CD4-positive, alpha-beta memory T cell (primary cell): ENCODE measurements at regions of chr7 and their contacts with region 1.

Region 1: DNA sequence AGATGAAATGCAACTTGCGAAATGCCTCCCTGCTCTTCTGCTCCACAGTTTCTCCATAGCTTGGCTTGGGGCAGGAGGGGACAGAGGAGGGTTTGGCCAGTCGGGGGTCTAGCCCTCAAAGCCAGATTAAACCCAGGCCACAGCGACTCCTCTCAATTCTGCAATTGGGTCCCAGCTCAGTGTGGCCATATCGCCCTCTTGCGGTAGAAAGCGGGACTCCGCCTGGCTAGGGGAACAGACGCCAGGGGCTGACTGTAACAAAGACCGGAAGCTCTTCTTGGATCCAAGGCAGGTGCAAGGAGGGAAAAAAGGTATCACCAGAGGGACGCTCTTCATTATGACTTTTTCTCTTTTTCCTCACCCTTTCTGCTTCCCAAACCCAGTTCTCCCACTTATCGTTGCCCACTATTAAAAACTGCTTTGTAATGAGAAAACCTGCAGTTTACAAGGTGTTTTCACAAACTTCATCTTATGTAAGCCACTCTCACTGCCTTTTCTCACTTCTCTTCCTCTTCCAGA is 36.6 kb upstream of the TNPO3 start:
- DNase-seq: peak; percentile 71 to 80 (median 78)
- H3K4me3 ChIP-seq: no peak overlapping the region
- H3K4me3 Mint-ChIP-seq: no peak overlapping the region
- H3K27ac ChIP-seq: no peak overlapping the region
- H3K27ac Mint-ChIP-seq: peak overlapping the region in 5 of 7 donors; percentile 1 to 70 (median 54)
- H3K4me1 ChIP-seq: peaks cover 18% of the 10 kb centered on the region
- H3K4me1 Mint-ChIP-seq: peaks cover 10 to 24% (median 16%) of the 10 kb centered on the region in 4 donors
- H3K27me3 ChIP-seq: peaks cover 3% of the 10 kb centered on the region
- H3K27me3 Mint-ChIP-seq: no peaks in the 10 kb centered on the region

Region 2: GRCh38 chr7:128904381-128905197 is 187.0 kb before region 1 on chr7:
- CTCF ChIA-PET with region 1: interaction called, 41 read pairs
- POLR2A ChIA-PET with region 1: no interaction called
- intact Hi-C with region 1: no loop called
- DNase-seq: peak in 4 of 5 donors; percentile 57 to 72 (median 65)
- H3K4me3 ChIP-seq: no peak overlapping the region
- H3K4me3 Mint-ChIP-seq: peak overlapping the region in 1 of 8 donors; percentile 13
- H3K27ac ChIP-seq: no peak overlapping the region
- H3K27ac Mint-ChIP-seq: peak overlapping the region in 1 of 7 donors; percentile 22
- H3K4me1 ChIP-seq: no peaks in the 10 kb centered on the region
- H3K4me1 Mint-ChIP-seq: peaks cover 0 to 3% (median 0%) of the 10 kb centered on the region in 4 donors
- H3K27me3 ChIP-seq: no peaks in the 10 kb centered on the region
- H3K27me3 Mint-ChIP-seq: peaks cover 16 to 31% of the 10 kb centered on the region in 2 donors

Region 3: GRCh38 chr7:128909625-128910257 is 181.8 kb before region 1 on chr7:
- CTCF ChIA-PET with region 1: interaction called, 23 read pairs
- POLR2A ChIA-PET with region 1: no interaction called
- intact Hi-C with region 1: no loop called
- DNase-seq: no peak
- H3K4me3 ChIP-seq: no peak overlapping the region
- H3K4me3 Mint-ChIP-seq: no peak overlapping the region
- H3K27ac ChIP-seq: no peak overlapping the region
- H3K27ac Mint-ChIP-seq: peak overlapping the region in 1 of 7 donors; percentile 8
- H3K4me1 ChIP-seq: peaks cover 2% of the 10 kb centered on the region
- H3K4me1 Mint-ChIP-seq: peaks cover 2 to 8% (median 5%) of the 10 kb centered on the region in 4 donors
- H3K27me3 ChIP-seq: peaks cover 5% of the 10 kb centered on the region
- H3K27me3 Mint-ChIP-seq: peaks cover 28 to 54% of the 10 kb centered on the region in 2 donors

Region 4: DNA sequence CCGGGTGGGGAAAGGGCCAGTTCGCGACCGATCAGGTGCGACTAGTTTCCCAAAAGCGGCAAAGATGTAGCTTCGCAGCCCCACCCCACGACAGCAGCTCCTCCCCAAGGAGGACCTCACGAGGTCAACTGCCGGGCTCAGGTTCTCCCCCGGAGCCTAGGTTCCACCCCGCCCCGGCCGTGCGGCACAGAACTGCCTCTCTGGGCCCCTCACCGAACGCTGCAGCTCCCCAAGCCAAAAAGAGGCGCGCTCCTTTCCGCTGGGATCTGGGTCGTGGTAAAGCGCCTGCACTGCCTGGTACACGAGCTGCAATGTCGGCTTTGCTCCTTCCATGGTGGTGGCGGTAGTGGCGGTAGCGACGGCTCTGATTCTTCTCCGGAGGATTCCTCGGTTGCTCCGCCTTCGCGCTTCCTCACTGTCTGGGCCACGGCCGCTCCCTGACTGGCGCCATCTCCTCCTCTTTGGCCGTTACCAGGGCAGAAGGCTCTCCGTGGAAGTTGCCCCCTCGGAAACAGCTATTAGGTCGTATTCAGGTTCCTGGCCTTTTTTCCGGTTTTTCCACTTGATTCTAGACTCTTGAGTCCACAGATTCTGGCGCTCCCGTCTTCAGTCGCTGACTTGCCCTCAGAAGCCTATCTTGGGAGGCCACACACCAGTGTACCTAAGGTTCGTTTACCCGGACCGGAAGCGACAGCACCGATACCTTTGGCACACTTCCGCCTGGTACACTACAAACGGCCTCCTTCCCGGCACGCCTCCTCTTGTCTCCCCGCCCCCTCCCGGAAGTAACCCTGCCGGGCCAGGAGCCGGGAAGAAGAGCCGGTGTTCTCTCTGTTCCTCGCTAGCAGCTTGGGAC is 36.9 kb before region 1 on chr7 and contains the start of gene TNPO3:
- CTCF ChIA-PET with region 1: interaction called, 8 read pairs
- POLR2A ChIA-PET with region 1: interaction called, 3 read pairs
- intact Hi-C with region 1: loop called (anchors 2 kb)
- DNase-seq: peak; percentile 87 to 91 (median 88)
- H3K4me3 ChIP-seq: peak within 1 kb of the TSS; percentile 80 to 91
- H3K4me3 Mint-ChIP-seq: peak within 1 kb of the TSS; percentile 94 to 100 (median 98)
- H3K27ac ChIP-seq: peak within 1 kb of the TSS; percentile 82
- H3K27ac Mint-ChIP-seq: peak within 1 kb of the TSS; percentile 98 to 100 (median 99)
- H3K4me1 ChIP-seq: peaks cover 31% of the 10 kb centered on the region
- H3K4me1 Mint-ChIP-seq: peaks cover 20 to 51% (median 38%) of the 10 kb centered on the region in 4 donors
- H3K27me3 ChIP-seq: no peaks in the 10 kb centered on the region
- H3K27me3 Mint-ChIP-seq: peaks cover 3 to 7% of the 10 kb centered on the region in 2 donors
- total RNA-seq, gene TNPO3: 41.7 to 44.5 TPM

Region 5: DNA sequence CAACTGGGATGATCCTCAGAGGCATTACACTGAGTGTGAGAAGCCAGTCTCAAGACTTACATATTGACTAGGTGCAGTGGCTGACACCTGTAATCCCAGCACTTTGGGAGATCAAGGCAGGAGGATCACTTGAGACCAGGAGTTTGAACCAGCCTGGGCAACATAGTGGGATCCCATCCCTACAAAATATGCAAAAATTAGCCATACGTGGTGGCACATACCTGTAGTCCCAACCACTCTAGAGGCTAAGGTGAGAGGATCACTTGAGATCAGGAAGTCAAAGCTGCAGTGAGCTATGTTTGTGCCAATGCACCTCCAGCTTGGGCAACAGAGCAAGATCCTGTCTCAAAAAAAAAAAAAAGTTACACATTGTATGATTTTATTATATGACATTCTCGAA is 13.1 kb before region 1 on chr7:
- CTCF ChIA-PET with region 1: interaction called, 15 read pairs
- POLR2A ChIA-PET with region 1: interaction called, 3 read pairs
- intact Hi-C with region 1: no loop called
- DNase-seq: no peak
- H3K4me3 ChIP-seq: no peak overlapping the region
- H3K4me3 Mint-ChIP-seq: no peak overlapping the region
- H3K27ac ChIP-seq: no peak overlapping the region
- H3K27ac Mint-ChIP-seq: no peak overlapping the region
- H3K4me1 ChIP-seq: no peaks in the 10 kb centered on the region
- H3K4me1 Mint-ChIP-seq: no peaks in the 10 kb centered on the region
- H3K27me3 ChIP-seq: no peaks in the 10 kb centered on the region
- H3K27me3 Mint-ChIP-seq: peaks cover 4 to 6% of the 10 kb centered on the region in 2 donors

Region 6: DNA sequence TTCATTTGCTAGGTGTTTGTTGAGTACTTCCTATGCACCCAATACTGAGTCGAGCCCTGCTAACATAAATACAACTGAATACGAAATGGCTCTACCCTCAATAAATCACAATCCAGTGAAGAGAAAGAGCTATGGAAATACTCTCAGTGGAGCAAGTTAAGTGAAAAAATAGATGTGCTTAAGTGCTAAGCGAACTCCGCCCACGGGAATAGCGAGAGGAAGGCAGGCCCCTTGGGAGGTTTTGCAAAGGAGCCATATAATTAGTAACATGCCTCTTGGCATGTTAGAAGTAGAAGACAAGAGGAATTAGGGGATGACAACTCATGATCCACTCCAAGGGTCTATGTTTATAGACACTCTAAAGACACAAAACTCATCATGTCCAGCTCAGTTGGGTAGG is 10.2 kb after region 1 on chr7:
- CTCF ChIA-PET with region 1: interaction called, 36 read pairs
- POLR2A ChIA-PET with region 1: no interaction called
- intact Hi-C with region 1: no loop called
- DNase-seq: no peak
- H3K4me3 ChIP-seq: no peak overlapping the region
- H3K4me3 Mint-ChIP-seq: no peak overlapping the region
- H3K27ac ChIP-seq: no peak overlapping the region
- H3K27ac Mint-ChIP-seq: no peak overlapping the region
- H3K4me1 ChIP-seq: no peaks in the 10 kb centered on the region
- H3K4me1 Mint-ChIP-seq: no peaks in the 10 kb centered on the region
- H3K27me3 ChIP-seq: no peaks in the 10 kb centered on the region
- H3K27me3 Mint-ChIP-seq: peaks cover 3 to 4% of the 10 kb centered on the region in 2 donors

Region 7: GRCh38 chr7:129136887-129137642 is 45.5 kb after region 1 on chr7:
- CTCF ChIA-PET with region 1: no interaction called
- POLR2A ChIA-PET with region 1: no interaction called
- intact Hi-C with region 1: no loop called
- DNase-seq: peak in 3 of 5 donors; percentile 14 to 15 (median 14)
- H3K4me3 ChIP-seq: no peak overlapping the region
- H3K4me3 Mint-ChIP-seq: peak overlapping the region in 7 of 8 donors; percentile 0 to 68 (median 55)
- H3K27ac ChIP-seq: no peak overlapping the region
- H3K27ac Mint-ChIP-seq: peak overlapping the region; percentile 36 to 92 (median 78)
- H3K4me1 ChIP-seq: peaks cover 24% of the 10 kb centered on the region
- H3K4me1 Mint-ChIP-seq: peaks cover 20 to 33% (median 24%) of the 10 kb centered on the region in 4 donors
- H3K27me3 ChIP-seq: no peaks in the 10 kb centered on the region
- H3K27me3 Mint-ChIP-seq: no peaks in the 10 kb centered on the region

Region 8: DNA sequence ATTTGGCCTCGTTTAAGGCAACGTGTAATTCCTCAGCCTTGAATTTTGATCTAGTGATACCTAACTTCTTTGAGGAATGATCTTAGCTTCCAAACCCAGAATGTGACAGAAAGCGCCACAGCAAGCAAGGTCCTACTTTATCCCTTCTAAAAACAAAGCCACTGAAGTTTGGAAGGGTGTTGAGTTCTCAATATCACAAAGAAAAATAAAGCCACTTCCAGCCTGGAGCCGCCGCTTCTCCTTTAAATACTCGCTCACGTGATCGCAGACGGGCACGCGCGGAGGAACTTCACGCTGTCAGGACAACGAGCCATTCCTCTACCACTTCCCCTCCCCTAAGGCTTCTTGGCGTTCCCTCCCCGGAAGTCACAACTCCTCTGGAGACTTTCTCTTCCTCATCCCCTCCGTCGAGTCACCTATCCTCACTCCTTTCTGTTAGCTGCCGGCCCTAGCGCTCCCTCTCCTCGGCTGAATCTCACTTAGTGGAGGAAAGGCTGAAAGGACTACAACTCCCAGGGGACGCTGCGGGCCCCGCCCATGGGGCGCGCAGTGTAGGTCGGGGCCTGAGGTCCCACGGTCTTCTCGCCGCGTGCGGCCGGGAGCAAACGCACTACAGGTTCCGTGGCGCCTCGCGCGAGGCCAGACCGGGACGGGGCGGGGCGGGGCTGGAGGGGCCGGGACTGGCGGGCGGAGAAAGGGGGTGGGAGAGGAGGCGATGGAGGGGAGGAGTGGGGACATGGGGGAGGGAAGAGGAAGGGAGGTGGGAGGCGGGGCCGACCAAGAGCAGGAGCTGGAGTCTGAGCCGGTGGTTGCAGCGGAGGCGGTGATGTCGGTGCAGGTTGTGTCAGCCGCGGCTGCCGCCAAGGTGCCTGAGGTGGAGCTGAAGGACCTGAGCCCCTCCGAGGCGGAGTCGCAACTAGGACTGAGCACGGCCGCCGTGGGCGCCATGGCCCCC is 133.0 kb after region 1 on chr7 and contains the start of gene AHCYL2:
- CTCF ChIA-PET with region 1: no interaction called
- POLR2A ChIA-PET with region 1: no interaction called
- intact Hi-C with region 1: no loop called
- DNase-seq: peak; percentile 95 to 98 (median 96)
- H3K4me3 ChIP-seq: peak within 1 kb of the TSS; percentile 87 to 98
- H3K4me3 Mint-ChIP-seq: peak within 1 kb of the TSS; percentile 94 to 98 (median 95)
- H3K27ac ChIP-seq: peak within 1 kb of the TSS; percentile 80
- H3K27ac Mint-ChIP-seq: peak within 1 kb of the TSS; percentile 86 to 99 (median 97)
- H3K4me1 ChIP-seq: peaks cover 28% of the 10 kb centered on the region
- H3K4me1 Mint-ChIP-seq: peaks cover 28 to 48% (median 35%) of the 10 kb centered on the region in 4 donors
- H3K27me3 ChIP-seq: no peaks in the 10 kb centered on the region
- H3K27me3 Mint-ChIP-seq: no peaks in the 10 kb centered on the region
- total RNA-seq, gene AHCYL2: 15.4 to 16.5 TPM

Region 9: GRCh38 chr7:130966246-130967009 is 1874.9 kb after region 1 on chr7:
- CTCF ChIA-PET with region 1: no interaction called
- POLR2A ChIA-PET with region 1: no interaction called
- intact Hi-C with region 1: no loop called
- DNase-seq: no peak
- H3K4me3 ChIP-seq: no peak overlapping the region
- H3K4me3 Mint-ChIP-seq: peak overlapping the region in 1 of 8 donors; percentile 4
- H3K27ac ChIP-seq: no peak overlapping the region
- H3K27ac Mint-ChIP-seq: peak overlapping the region in 6 of 7 donors; percentile 31 to 94 (median 64)
- H3K4me1 ChIP-seq: peaks cover 73% of the 10 kb centered on the region
- H3K4me1 Mint-ChIP-seq: peaks cover 47 to 66% (median 56%) of the 10 kb centered on the region in 4 donors
- H3K27me3 ChIP-seq: no peaks in the 10 kb centered on the region
- H3K27me3 Mint-ChIP-seq: no peaks in the 10 kb centered on the region